Ovary (tissue), 10 donors: ENCODE measurements at regions of chr19 and their contacts with region 1.

Region 1: DNA sequence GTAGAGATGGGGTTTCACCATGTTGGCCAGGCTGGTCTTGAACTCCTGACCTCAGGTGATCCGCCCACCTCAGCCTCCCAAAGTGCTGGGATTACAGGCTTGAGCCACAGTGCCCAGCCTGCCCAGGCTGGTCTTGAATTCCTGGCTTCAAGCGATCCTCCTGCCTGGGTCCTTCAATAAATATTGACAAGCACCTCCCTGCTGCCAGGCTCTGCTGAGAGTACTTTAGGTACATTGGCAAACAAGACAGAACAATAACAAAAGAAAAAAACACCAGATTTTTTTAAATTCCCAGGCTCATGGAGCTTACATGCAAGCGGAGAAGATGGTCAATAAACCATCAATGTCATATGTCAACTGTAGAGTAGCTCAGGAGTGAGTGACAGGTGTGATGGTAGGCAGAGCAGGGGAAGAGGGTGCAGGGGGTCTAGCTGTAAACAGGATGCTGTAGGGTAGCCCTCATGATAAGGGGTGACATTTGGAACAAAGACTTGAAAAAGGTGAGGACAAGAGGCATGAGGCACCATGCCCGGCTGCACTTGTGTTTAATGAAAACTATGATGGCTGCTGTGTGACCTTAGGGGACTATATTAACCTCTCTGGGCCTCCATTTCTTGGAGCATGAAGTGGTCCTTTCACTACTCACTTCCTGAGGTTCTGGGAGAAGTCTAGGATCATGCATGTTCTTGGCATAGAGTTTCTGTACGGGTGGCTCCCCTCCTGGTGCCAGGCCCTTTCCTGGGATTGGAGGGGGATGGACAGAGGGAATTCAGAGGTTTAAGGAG is 19.6 kb downstream of the SULT2B1 start:
- DNase-seq: no peak
- H3K4me3 ChIP-seq: no peak overlapping the region
- H3K27ac ChIP-seq: no peak overlapping the region
- H3K4me1 ChIP-seq: no peaks in the 10 kb centered on the region
- H3K27me3 ChIP-seq: no peaks in the 10 kb centered on the region
- CTCF ChIP-seq: no peak
- EP300 ChIP-seq: no peak
- POLR2A ChIP-seq: no peak

Region 2: DNA sequence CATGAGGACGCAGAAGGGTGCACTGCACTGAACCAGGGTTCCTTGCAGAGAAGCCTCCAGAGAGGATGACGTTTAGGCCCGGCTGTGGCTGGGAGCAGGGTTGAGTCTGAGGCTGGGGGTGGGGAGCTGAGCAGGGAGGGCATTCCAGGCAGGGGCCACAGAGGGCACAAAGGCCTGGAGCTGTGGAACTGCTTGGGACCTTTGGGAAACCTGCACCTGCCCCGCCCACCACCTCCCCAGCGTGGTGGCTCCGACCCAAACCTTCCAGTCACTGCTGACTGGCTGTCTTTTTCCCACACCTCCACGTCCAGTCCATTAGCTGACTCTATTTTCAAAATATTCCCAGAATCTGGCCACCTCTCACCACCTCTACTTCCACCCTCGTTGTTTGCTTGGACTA is 55.0 kb before region 1 on chr19:
- intact Hi-C with region 1: loop called in 1 of 4 experiments (anchors 2 kb)
- DNase-seq: no peak
- H3K4me3 ChIP-seq: no peak overlapping the region
- H3K27ac ChIP-seq: no peak overlapping the region
- H3K4me1 ChIP-seq: peaks cover 2% of the 10 kb centered on the region
- H3K27me3 ChIP-seq: peaks cover 6% of the 10 kb centered on the region
- CTCF ChIP-seq: no peak
- EP300 ChIP-seq: no peak
- POLR2A ChIP-seq: no peak